Endothelial cell of umbilical vein (primary cell): ENCODE measurements at regions of chr7 and their contacts with region 1.

Region 1: GRCh38 chr7:45111298-45112223 is at the start of gene TBRG4:
- DNase-seq: peak; percentile 93
- H3K4me3 ChIP-seq: peak within 1 kb of the TSS; percentile 33 to 88 (median 64)
- H3K27ac ChIP-seq: peak within 1 kb of the TSS; percentile 57
- H3K4me1 ChIP-seq: peaks cover 8% of the 10 kb centered on the region
- H3K27me3 ChIP-seq: peaks cover 11 to 26% of the 10 kb centered on the region in 2 experiments
- CTCF ChIP-seq: peak in 1 of 2 donors; percentile 42
- POLR2A ChIP-seq: peak; percentile 82
- total RNA-seq, gene TBRG4: 56.7 and 63.4 TPM in 2 replicates

Region 2: GRCh38 chr7:44581879-44582603 is 529.5 kb before region 1 on chr7 and contains the start of gene TMED4:
- CTCF ChIA-PET with region 1: no interaction called
- POLR2A ChIA-PET with region 1: no interaction called
- dilution Hi-C with region 1: no loop called
- intact Hi-C with region 1: loop called (anchors 1 kb)
- DNase-seq: peak; percentile 99
- H3K4me3 ChIP-seq: peak within 1 kb of the TSS; percentile 34 to 78 (median 67)
- H3K27ac ChIP-seq: peak within 1 kb of the TSS; percentile 73
- H3K4me1 ChIP-seq: peaks cover 8% of the 10 kb centered on the region
- H3K27me3 ChIP-seq: no peaks in the 10 kb centered on the region
- CTCF ChIP-seq: no peak
- POLR2A ChIP-seq: peak; percentile 98
- total RNA-seq, gene TMED4: 63.4 and 65.4 TPM in 2 replicates

Region 3: DNA sequence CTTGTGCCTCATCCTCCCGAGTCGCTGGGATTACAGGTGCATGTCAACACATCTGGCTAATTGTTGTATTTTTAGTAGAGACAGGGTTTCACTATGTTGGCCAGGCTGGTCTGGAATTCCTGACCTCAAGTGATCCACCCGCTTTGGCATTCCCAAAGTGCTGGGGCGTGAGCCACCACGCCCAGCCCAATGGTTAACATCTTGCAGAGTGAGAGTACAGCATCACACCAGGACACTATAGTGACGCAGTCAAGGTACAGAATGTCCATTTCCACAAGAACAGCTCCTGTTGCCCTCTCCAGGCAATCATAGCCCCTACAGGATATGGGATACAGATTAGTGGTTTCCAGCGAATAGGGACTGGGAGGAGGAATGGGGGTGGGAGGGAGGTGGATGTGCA is 166.7 kb before region 1 on chr7:
- CTCF ChIA-PET with region 1: no interaction called
- POLR2A ChIA-PET with region 1: no interaction called
- dilution Hi-C with region 1: no loop called
- intact Hi-C with region 1: no loop called
- DNase-seq: no peak
- H3K4me3 ChIP-seq: no peak overlapping the region
- H3K27ac ChIP-seq: no peak overlapping the region
- H3K4me1 ChIP-seq: no peaks in the 10 kb centered on the region
- H3K27me3 ChIP-seq: peaks cover 0 to 12% of the 10 kb centered on the region in 2 experiments
- CTCF ChIP-seq: no peak
- POLR2A ChIP-seq: no peak

Region 4: GRCh38 chr7:44986218-44987053 is 125.1 kb before region 1 on chr7:
- CTCF ChIA-PET with region 1: no interaction called
- POLR2A ChIA-PET with region 1: no interaction called
- dilution Hi-C with region 1: no loop called
- intact Hi-C with region 1: loop called (anchors 1 kb)
- DNase-seq: peak; percentile 94
- H3K4me3 ChIP-seq: peak overlapping the region; percentile 42 to 81 (median 70)
- H3K27ac ChIP-seq: peak overlapping the region; percentile 88
- H3K4me1 ChIP-seq: peaks cover 29% of the 10 kb centered on the region
- H3K27me3 ChIP-seq: no peaks in the 10 kb centered on the region
- CTCF ChIP-seq: no peak
- POLR2A ChIP-seq: peak; percentile 98